ENCODE measurements at regions of chr12 and their contacts with region 1.

Region 1: GRCh38 chr12:132429946-132430643 is 59.9 kb upstream of the FBRSL1 start:
- DNase-seq: no peak
- ATAC-seq: peak in 4 of 8 donors; percentile 51 to 60 (median 54)
- H3K4me3 ChIP-seq: peak overlapping the region in 1 of 10 donors; percentile 5
- H3K27ac ChIP-seq: no peak overlapping the region
- H3K4me1 ChIP-seq: peaks cover 6 to 26% (median 18%) of the 10 kb centered on the region in 9 donors
- H3K27me3 ChIP-seq: peaks cover 0 to 94% (median 76%) of the 10 kb centered on the region in 7 donors
- CTCF ChIP-seq: no peak

Region 2: GRCh38 chr12:131152587-131152986 is 1277.5 kb before region 1 on chr12:
- intact Hi-C with region 1: loop called in 1 of 10 experiments (anchors 5 kb)
- DNase-seq: no peak
- ATAC-seq: peak in 2 of 8 donors; percentile 22 to 54
- H3K4me3 ChIP-seq: no peak overlapping the region
- H3K27ac ChIP-seq: no peak overlapping the region
- H3K4me1 ChIP-seq: no peaks in the 10 kb centered on the region
- H3K27me3 ChIP-seq: no peaks in the 10 kb centered on the region
- CTCF ChIP-seq: no peak

Region 3: DNA sequence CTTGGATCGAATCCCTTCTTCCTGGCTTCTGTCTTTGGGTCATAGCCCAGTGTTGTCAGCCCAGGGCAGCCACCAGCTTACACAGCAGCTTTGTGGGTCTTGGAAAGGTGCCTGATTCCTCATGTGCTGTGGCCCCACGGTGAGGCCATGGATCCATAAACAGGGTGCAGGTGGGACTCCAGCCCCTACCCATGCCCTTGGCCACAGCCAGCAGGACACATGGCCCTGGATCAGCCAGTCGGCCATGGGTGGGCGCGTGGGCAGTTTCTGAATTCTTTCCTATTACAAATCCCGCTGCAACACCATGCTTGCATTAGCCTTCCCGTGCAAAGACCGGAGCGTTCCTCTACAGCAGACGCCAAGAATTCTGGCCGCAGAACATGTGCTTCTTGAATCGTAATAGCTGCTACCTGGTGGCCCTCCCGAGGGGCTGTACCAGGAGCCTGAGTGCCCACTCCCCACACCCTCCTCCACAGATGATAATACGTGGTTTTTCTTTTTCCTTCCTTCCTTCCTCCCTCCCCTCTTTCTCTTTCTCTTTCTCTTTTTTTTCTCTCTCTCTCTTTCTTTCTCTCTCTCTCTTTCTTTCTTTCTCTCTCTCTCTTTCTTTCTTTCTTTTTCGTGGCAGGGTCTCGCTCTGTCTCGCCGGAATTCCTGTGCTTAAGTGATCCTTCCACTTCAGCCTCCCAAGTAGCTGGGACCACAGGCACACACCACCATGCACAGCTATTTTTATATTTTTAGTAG is 604.8 kb before region 1 on chr12:
- intact Hi-C with region 1: no loop called
- DNase-seq: no peak
- ATAC-seq: no peak
- H3K4me3 ChIP-seq: no peak overlapping the region
- H3K27ac ChIP-seq: no peak overlapping the region
- H3K4me1 ChIP-seq: peaks cover 5 to 23% (median 22%) of the 10 kb centered on the region in 9 donors
- H3K27me3 ChIP-seq: peaks cover 0 to 67% (median 47%) of the 10 kb centered on the region in 7 donors
- CTCF ChIP-seq: no peak

Region 4: GRCh38 chr12:132314516-132315233 is 115.4 kb before region 1 on chr12:
- intact Hi-C with region 1: no loop called
- DNase-seq: no peak
- ATAC-seq: no peak
- H3K4me3 ChIP-seq: no peak overlapping the region
- H3K27ac ChIP-seq: no peak overlapping the region
- H3K4me1 ChIP-seq: no peaks in the 10 kb centered on the region
- H3K27me3 ChIP-seq: peaks cover 0 to 40% (median 15%) of the 10 kb centered on the region in 7 donors
- CTCF ChIP-seq: no peak

Region 5: GRCh38 chr12:132460571-132460970 is 30.5 kb after region 1 on chr12:
- intact Hi-C with region 1: no loop called
- DNase-seq: no peak
- ATAC-seq: no peak
- H3K4me3 ChIP-seq: no peak overlapping the region
- H3K27ac ChIP-seq: no peak overlapping the region
- H3K4me1 ChIP-seq: no peaks in the 10 kb centered on the region
- H3K27me3 ChIP-seq: peaks cover 7 to 42% (median 35%) of the 10 kb centered on the region in 7 donors
- CTCF ChIP-seq: peak in 7 of 9 donors; percentile 13 to 41 (median 20)

Region 6: GRCh38 chr12:132538336-132538990 is 108.4 kb after region 1 on chr12:
- intact Hi-C with region 1: no loop called
- DNase-seq: no peak
- ATAC-seq: no peak
- H3K4me3 ChIP-seq: no peak overlapping the region
- H3K27ac ChIP-seq: no peak overlapping the region
- H3K4me1 ChIP-seq: no peaks in the 10 kb centered on the region
- H3K27me3 ChIP-seq: no peaks in the 10 kb centered on the region
- CTCF ChIP-seq: no peak

Measured in heart right ventricle (tissue), 16 donors.